Aorta (tissue), 5 donors: ENCODE measurements at regions of chr1 and their contacts with region 1.

Region 1: DNA sequence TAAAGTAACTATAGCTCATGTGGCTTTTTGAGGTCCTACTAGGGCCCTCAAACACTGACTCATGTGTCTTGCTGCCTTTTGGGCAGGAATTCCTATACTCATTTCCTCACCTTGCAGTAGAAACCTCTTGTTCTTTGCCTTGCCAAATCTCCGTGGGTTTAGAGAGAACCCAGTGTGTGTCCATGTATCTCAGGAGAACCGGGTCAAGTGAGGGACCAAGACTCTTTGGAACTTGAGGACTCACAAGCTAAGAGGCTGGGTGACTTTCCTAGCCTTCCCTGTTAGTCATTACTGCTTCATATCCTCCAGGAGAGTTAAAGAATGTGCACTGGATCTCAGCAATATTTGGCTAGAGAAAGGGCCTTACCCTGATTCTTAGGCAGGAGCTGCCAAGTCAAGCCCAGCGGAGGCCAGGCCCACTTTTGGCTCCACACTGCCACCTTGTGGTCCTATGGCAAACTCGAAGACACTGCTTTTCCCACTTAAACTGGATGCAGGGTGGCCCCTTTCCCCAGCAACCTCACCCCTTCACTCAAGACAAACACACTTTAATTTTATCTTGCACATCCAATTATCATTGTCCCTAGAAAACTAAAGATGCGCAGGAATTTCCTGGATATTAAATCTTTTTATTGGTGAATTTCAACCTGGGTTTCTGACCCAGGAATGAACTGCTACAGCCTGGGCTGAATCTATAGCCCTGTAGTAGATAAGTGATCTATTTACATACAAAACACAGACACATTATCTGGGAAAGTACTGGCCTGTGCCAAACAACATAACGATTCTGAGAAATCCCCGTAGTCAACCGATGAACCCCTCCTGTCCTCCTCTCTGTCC is 10.6 kb downstream of the AVPR1B start:
- DNase-seq: peak; percentile 90 to 92
- ATAC-seq: peak; percentile 93
- H3K4me3 ChIP-seq: no peak overlapping the region
- H3K27ac ChIP-seq: no peak overlapping the region
- H3K4me1 ChIP-seq: no peaks in the 10 kb centered on the region
- H3K27me3 ChIP-seq: no peaks in the 10 kb centered on the region

Region 2: GRCh38 chr1:205791568-205792180 is 314.9 kb before region 1 on chr1:
- intact Hi-C with region 1: loop called (anchors 5 kb)
- DNase-seq: peak; percentile 71 to 80
- ATAC-seq: peak; percentile 87
- H3K4me3 ChIP-seq: no peak overlapping the region
- H3K27ac ChIP-seq: no peak overlapping the region
- H3K4me1 ChIP-seq: no peaks in the 10 kb centered on the region
- H3K27me3 ChIP-seq: no peaks in the 10 kb centered on the region

Region 3: GRCh38 chr1:205919026-205919746 is 187.4 kb before region 1 on chr1:
- intact Hi-C with region 1: loop called (anchors 5 kb)
- DNase-seq: peak; percentile 89 to 90
- ATAC-seq: peak; percentile 84
- H3K4me3 ChIP-seq: no peak overlapping the region
- H3K27ac ChIP-seq: peak overlapping the region; percentile 14 to 35
- H3K4me1 ChIP-seq: peaks cover 3 to 9% of the 10 kb centered on the region in 2 donors
- H3K27me3 ChIP-seq: no peaks in the 10 kb centered on the region

Region 4: GRCh38 chr1:205983925-205984725 is 122.4 kb before region 1 on chr1:
- intact Hi-C with region 1: loop called (anchors 1 to 5 kb)
- DNase-seq: peak; percentile 81 to 83
- ATAC-seq: peak; percentile 60
- H3K4me3 ChIP-seq: no peak overlapping the region
- H3K27ac ChIP-seq: no peak overlapping the region
- H3K4me1 ChIP-seq: no peaks in the 10 kb centered on the region
- H3K27me3 ChIP-seq: no peaks in the 10 kb centered on the region

Region 5: DNA sequence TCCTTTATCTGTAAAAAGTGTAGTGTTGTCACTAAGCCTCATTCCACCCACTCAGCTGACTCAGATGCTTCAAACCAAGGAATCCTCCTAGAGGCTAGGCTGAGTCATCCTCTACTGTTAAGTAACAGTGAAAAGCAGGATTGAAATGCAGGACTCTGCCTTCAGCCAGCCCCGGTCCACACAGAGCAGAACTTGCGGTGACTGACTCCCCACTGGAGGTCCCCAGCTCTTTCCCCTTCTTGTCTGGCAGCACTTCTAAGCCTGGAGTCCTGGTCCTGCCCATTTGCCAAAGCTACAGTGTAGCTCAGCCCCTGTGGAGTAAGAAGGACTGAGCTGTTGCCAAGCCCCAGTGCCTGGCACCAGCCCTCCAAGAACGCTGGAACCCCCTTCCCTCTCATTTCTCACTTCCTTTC is 105.1 kb before region 1 on chr1:
- intact Hi-C with region 1: loop called in 1 of 2 experiments (anchors 5 kb)
- DNase-seq: peak in 1 of 2 donors; percentile 74
- ATAC-seq: peak; percentile 71
- H3K4me3 ChIP-seq: no peak overlapping the region
- H3K27ac ChIP-seq: no peak overlapping the region
- H3K4me1 ChIP-seq: peaks cover 2 to 3% of the 10 kb centered on the region in 2 donors
- H3K27me3 ChIP-seq: no peaks in the 10 kb centered on the region

Region 6: GRCh38 chr1:206032380-206033140 is 74.0 kb before region 1 on chr1:
- intact Hi-C with region 1: loop called in 1 of 2 experiments (anchors 2 kb)
- DNase-seq: no peak
- ATAC-seq: no peak
- H3K4me3 ChIP-seq: no peak overlapping the region
- H3K27ac ChIP-seq: no peak overlapping the region
- H3K4me1 ChIP-seq: no peaks in the 10 kb centered on the region
- H3K27me3 ChIP-seq: peaks cover 0 to 3% of the 10 kb centered on the region in 2 donors

Region 7: GRCh38 chr1:206507284-206508129 is 401.0 kb after region 1 on chr1 and contains the start of gene RASSF5:
- intact Hi-C with region 1: no loop called
- DNase-seq: peak; percentile 92 to 96
- ATAC-seq: peak; percentile 87
- H3K4me3 ChIP-seq: peak within 1 kb of the TSS; percentile 48 to 90
- H3K27ac ChIP-seq: peak within 1 kb of the TSS in 1 of 2 donors; percentile 4
- H3K4me1 ChIP-seq: no peaks in the 10 kb centered on the region
- H3K27me3 ChIP-seq: no peaks in the 10 kb centered on the region
- total RNA-seq, gene RASSF5: 14.8 to 18.2 TPM